PC-3 (cell line): ENCODE measurements at regions of chr6 and their contacts with region 1.

Region 1: DNA sequence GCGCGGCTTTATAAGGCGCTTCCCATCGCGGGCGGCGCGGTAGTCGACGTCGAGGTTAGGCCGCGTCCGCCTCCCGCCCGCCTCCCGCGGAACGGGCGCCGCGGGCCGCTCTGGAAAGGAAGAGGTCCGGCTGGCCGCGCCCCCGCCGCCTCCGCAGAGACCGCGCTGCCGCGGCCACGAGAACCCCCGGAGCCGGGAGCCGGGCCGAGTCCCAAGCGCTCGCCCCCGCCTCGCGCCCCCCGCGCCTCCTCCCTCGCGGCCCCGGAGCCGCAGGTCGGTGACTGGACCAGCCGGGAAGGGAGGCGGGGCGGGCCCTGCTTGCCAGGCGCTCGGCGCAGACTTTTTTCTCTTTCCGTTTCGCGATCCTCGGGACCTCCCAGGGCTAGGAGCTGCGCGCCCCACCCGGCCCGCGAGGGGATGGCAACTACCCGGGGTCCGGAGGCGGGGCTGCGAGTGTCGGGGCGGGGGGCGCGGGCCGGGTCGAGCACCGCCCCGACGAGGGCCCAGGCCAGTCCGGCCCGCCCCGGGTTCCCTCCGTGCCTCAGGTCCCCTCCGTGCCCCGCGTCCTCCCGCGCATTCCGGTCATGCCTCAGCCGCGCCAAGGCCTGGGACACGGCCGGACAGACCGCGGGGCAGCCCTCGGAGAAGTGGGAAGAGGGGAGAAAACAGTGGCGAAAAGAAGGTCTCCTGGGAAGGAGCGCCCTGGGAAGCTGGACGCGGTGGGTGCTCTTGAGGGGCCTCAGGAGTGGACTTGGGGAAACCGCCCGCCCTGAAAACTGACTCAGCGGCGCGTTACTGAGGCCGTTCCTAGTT is 423 bp upstream of the PXDC1 start:
- DNase-seq: peak; percentile 88
- ATAC-seq: peak; percentile 54
- H3K4me3 ChIP-seq: peak overlapping the region; percentile 80
- H3K27ac ChIP-seq: peak overlapping the region; percentile 70; the same call in 1 of the 2 replicates
- H3K4me1 ChIP-seq: peaks cover 23% of the 10 kb centered on the region
- H3K27me3 ChIP-seq: no peaks in the 10 kb centered on the region
- CTCF ChIP-seq: peak; percentile 28; the same call in 1 of the 2 replicates

Region 2: DNA sequence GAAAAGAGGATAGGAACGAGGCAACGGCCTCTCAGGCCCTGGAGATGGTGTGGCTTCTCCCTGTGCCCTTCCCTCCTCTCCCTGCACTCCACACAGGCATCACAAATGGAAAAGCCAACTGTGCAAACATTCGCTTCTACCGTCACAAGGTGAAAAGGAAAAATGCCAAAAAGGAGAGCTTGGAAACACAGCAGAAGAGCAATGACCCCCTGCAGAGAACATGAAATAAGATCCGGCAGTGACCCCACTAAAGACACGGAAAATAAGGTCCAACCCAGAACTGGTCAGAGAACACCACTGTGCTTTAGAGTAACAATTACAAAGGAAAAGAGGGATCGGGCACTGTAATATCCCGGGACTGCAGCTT is 358.1 kb before region 1 on chr6:
- CTCF ChIA-PET with region 1: no interaction called
- POLR2A ChIA-PET with region 1: no interaction called
- intact Hi-C with region 1: no loop called
- DNase-seq: no peak
- ATAC-seq: no peak
- H3K4me3 ChIP-seq: no peak overlapping the region
- H3K27ac ChIP-seq: no peak overlapping the region
- H3K4me1 ChIP-seq: peaks cover 17% of the 10 kb centered on the region
- H3K27me3 ChIP-seq: no peaks in the 10 kb centered on the region
- CTCF ChIP-seq: no peak

Region 3: DNA sequence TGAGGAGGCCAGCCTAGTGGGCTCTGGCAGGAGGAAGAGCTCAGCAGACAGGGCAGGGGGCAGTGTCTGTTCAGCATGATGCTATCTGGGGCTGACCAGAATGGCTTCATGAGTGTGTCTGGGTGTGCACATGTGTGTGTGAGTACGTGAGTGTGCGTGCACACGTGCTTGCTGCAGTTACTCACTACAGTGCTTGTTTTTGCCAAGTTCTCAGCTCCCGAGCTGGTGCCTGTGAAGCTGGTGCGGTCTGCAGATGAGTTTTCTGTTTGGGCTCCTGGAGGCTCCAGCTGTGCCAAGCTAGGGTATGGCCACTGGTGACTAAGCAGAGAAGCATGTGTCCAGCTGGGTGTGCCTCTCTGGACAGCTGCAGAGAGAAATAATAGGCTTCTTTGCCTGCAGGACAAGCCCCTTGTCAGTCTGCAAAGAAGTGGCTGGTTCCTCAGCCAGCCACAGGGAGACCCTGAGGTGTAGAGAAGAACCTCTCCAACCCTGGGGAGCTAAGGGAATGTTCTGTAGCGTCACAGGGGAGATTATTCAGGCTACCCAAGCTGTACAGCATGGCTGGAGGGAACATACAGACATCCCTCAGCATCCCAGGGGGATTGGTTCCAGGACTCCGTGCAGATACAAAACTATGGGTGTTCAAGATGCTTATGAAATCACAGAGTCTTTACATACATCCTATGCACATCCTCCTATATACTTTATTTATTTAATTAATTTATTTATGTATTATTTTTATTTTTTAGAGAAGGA is 57.0 kb after region 1 on chr6:
- CTCF ChIA-PET with region 1: interaction called, 7 read pairs
- POLR2A ChIA-PET with region 1: no interaction called
- intact Hi-C with region 1: loop called (anchors 5 kb)
- DNase-seq: peak; percentile 95
- ATAC-seq: peak; percentile 89
- H3K4me3 ChIP-seq: peak overlapping the region; percentile 10; the same call in 1 of the 2 replicates
- H3K27ac ChIP-seq: peak overlapping the region; percentile 67
- H3K4me1 ChIP-seq: peaks cover 60% of the 10 kb centered on the region
- H3K27me3 ChIP-seq: no peaks in the 10 kb centered on the region
- CTCF ChIP-seq: no peak; the same call in 1 of the 2 replicates

Region 4: DNA sequence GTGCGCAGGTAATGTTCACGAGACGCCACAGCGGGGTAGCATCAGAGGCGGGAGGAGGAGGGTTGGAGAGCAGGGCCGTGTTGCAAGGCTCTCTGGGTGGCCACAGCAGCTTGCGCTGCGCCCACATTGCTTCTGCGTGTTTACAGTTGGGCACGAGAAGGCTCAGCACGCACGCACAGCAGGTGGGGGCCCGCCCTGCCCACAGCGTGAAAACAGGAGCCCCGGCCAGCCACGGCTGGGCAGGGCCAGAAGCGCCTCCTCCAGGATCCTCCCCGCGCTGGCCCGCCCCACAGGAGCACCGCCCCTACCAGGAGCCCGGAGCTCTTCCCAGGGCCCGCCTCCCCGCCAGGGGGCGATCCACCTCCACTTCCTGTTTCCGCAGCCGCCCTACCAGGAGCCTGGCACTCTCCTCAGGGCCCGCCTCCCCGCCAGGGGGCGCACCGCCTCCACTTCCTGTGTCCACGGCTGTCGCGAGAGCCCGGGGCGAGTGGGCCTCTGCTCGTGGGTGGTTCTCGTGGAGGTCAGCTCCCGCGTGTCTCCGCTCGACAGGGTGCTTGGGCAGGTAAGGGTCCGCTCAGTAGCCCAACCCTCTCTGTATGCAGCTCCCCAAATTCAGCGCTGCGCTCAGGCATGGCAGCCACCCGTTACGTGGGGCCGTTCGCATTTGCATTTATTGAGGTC is 97.1 kb after region 1 on chr6 and contains the start of gene FAM50B:
- CTCF ChIA-PET with region 1: interaction called, 6 read pairs
- POLR2A ChIA-PET with region 1: interaction called, 7 read pairs
- intact Hi-C with region 1: loop called (anchors 2 kb)
- DNase-seq: peak; percentile 92
- ATAC-seq: peak; percentile 95
- H3K4me3 ChIP-seq: peak within 1 kb of the TSS; percentile 61
- H3K27ac ChIP-seq: no peak within 1 kb of the TSS
- H3K4me1 ChIP-seq: peaks cover 20% of the 10 kb centered on the region
- H3K27me3 ChIP-seq: no peaks in the 10 kb centered on the region
- CTCF ChIP-seq: peak; percentile 97
- total RNA-seq, gene FAM50B: 8.3 and 10.2 TPM in 2 replicates

Region 5: DNA sequence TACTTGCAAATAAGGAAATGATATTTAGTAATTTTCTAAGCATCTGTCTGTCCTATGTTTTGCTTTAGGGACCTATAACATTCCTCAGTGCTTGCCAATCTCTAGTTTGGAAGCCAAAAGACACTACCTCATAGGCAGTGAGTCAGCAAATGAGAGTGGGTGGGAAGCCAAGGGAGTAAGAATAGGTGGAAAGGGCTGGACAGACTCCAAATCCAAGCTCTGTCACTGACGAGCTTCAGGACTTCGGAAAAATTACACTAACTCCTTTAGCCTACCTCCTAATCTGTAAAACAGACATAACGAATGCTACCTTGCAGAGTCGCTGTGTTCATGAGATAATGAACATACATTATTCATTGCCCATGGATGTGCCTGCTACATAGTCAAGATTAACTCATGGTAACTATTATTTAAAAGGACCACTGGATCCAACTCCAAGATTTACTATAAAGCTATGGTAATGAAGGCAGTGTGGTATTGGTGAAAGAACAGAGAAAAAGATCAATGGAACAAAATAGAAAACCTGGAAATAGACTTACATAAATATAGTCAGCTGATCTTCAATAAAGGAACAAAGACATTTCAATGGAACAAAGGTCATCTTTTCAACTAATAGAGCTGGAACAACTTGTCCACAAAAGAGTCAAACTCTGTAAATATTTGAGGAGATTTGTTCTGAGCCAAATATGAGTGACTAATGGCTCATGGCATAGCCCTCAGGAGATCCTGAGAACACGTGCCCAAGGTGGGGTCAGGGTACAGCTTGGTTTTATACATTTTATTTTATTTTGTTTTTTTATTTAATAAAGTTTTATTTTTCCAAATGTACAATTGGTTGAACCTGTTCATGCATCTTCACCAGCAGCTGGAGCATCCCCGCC is 161.4 kb after region 1 on chr6:
- CTCF ChIA-PET with region 1: no interaction called
- POLR2A ChIA-PET with region 1: interaction called, 3 read pairs
- intact Hi-C with region 1: loop called (anchors 1 kb)
- DNase-seq: peak; percentile 99
- ATAC-seq: peak; percentile 73
- H3K4me3 ChIP-seq: peak overlapping the region; percentile 65
- H3K27ac ChIP-seq: peak overlapping the region; percentile 95
- H3K4me1 ChIP-seq: peaks cover 44% of the 10 kb centered on the region
- H3K27me3 ChIP-seq: no peaks in the 10 kb centered on the region
- CTCF ChIP-seq: no peak

Region 6: DNA sequence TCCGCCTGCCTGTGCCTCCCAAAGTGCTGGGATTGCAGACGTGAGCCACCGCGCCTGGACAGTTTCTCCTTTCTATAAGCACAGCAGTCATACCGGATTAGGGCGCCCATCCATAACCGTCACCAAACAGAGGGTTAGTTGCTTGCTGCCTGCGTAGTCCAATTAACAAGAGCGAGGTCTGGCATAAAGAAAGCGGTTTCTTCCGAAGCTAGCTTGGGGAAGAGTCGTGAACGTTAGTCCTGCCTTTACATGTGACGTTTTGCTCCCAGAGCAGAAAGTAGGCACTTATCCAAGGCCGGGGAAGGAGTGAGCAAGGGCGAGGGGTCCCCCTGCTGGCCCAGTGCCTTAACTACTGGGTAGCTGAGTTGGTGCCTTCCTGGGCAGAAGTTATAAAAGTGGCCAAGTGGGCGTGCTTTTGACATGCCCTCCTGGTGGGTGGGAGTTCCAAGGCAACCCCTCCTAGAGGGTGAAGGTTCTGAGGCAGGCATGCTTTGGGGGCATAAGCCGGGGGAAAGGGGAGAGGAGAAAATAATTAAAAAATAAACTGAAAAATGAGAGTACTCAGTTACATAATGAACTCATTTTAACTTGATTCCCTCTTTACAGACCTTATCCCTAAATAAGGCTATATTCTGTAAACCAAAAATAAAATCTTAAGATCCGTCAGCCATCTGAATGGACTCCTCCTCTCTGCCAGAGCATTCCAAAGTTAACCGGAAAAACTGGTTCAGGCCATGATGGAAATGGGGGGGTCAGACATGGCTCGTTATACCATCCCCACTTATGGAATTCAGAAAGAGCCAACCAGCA is 239.0 kb after region 1 on chr6:
- CTCF ChIA-PET with region 1: no interaction called
- POLR2A ChIA-PET with region 1: interaction called, 3 read pairs
- intact Hi-C with region 1: loop called (anchors 1 kb)
- DNase-seq: peak; percentile 91
- ATAC-seq: peak; percentile 94
- H3K4me3 ChIP-seq: peak overlapping the region; percentile 61
- H3K27ac ChIP-seq: no peak overlapping the region
- H3K4me1 ChIP-seq: peaks cover 7% of the 10 kb centered on the region; the same call in 1 of the 2 replicates
- H3K27me3 ChIP-seq: no peaks in the 10 kb centered on the region
- CTCF ChIP-seq: peak; percentile 96